GM12878 (cell line): ENCODE measurements at regions of chr17 and their contacts with region 1.

Region 1: DNA sequence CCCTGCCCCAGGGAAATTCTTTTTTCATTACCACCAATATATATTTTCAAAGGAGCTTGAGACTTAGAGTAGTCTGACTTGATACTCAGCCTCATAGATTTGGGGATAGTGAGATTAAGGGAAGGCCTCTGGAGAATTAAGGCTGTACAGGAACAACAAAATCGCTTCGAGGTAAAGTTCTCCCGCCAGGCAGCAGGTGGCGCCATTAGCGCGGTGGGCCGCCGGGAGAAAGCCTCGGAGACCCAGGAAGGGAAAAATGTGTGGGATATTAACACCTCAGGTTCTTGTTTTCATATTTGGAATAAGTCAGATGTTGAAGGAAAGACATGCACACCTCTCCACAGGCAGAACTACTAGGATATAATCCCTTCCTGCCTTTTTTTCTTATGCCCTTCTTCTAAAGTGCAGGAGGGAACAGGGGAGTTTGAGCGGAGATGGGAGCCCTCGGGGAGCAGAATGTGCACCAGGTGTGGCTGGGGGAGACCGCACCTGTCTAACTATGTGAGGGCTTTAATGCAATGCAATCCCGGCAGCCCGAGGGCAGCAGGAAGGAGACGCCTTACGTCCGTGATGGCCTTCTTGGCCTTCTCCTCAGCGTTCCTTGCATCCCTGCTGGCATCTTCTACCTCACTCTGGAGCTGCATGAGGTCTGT is 25.9 kb downstream of the MYH3 start:
- DNase-seq: no peak
- ATAC-seq: 0 out of 3 replicates have a peak, but pooled peaks have one; percentile 29
- H3K4me3 ChIP-seq: no peak overlapping the region
- H3K27ac ChIP-seq: no peak overlapping the region
- H3K4me1 ChIP-seq: peaks cover 21% of the 10 kb centered on the region
- H3K27me3 ChIP-seq: no peaks in the 10 kb centered on the region
- CTCF ChIP-seq: peak; percentile 66 to 92 (median 89)
- EP300 ChIP-seq: no peak
- POLR2A ChIP-seq: no peak
- RAD21 ChIP-seq: peak; percentile 61

Region 2: DNA sequence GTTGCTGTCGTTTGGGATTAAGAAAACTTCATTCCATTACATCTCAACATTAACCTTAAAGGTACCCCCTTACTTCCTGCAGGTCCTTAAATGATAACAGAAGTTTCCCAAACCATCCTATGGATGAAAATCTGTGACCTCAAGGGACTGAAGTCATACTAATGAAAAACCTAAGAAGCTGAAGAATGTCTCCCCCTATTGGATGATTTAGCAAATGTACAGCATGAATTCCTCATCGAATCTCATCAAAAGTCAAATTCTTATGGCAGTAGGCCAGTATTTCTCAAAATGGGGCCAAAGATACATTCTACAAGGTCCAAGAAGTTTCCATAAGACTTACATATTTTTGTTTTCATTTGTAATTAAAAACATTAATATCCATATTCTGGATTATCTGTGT is 52.7 kb after region 1 on chr17:
- CTCF ChIA-PET with region 1: interaction called, 17 read pairs
- POLR2A ChIA-PET with region 1: no interaction called
- RAD21 ChIA-PET with region 1: no interaction called
- SMC1A ChIA-PET with region 1: interaction called, 5 read pairs
- in situ Hi-C with region 1: no loop called
- intact Hi-C with region 1: loop called (anchors 1 kb)
- DNase-seq: no peak
- ATAC-seq: no peak
- H3K4me3 ChIP-seq: no peak overlapping the region
- H3K27ac ChIP-seq: no peak overlapping the region
- H3K4me1 ChIP-seq: no peaks in the 10 kb centered on the region
- H3K27me3 ChIP-seq: no peaks in the 10 kb centered on the region
- CTCF ChIP-seq: peak; percentile 30 to 61 (median 32); a peak in 5 of 6 replicates
- EP300 ChIP-seq: no peak
- POLR2A ChIP-seq: no peak
- RAD21 ChIP-seq: peak; percentile 34; the same call in 1 of the 2 replicates

Region 3: DNA sequence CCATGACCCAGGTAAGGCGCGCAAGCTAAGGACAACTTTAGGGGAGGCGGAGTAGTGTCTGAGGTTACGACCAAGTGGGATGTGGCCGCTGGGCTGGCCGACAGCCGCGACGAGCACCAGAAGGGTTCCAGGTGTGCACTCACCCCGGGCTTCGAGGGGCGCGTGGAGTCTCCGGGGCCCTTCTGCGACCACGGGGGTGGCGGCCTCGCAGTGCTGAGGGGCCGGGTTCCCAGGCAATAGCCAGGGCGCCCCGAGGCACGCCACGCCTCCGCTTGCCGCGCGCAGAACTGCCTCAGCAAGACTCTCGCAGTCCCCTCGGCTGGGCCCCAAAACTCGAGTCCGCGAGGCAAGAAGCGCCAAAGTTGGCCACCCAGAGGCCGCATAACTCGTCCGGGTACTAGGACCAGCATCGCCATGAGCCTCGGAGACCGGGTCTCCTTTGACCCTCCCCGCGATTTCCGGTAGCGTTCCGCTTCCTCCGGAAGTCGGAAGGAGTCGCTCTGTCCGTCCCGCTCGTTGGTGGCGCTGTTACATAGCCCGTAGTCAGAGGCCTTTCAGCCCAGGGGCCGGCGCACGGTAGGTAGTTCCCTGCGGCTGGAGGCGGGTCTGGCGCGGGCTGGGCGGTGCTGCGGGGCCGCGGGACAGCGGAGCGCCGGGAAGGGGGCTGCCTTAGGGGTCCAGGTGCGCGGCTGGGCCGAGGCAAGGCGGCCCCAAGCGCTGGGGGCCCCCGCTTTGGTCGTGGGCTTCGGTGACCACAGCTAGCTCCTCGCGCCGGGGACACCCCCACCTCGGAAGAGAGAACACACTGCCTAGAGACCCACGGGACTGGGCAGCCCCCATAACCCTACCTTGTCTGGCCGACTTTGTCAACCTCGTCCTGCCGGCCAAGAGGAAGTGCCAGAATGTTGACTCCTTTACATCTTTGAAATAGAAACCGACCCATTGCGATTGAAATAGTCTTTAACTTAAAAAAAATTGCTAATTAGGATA is 66.2 kb after region 1 on chr17 and contains the starts of genes ADPRM and SCO1:
- CTCF ChIA-PET with region 1: interaction called, 13 read pairs
- POLR2A ChIA-PET with region 1: no interaction called
- RAD21 ChIA-PET with region 1: interaction called, 3 read pairs
- SMC1A ChIA-PET with region 1: no interaction called
- in situ Hi-C with region 1: no loop called
- intact Hi-C with region 1: no loop called
- DNase-seq: peak; percentile 73
- ATAC-seq: peak; percentile 98
- H3K4me3 ChIP-seq: peak within 1 kb of the TSS; percentile 93
- H3K27ac ChIP-seq: peak within 1 kb of the TSS; percentile 91
- H3K4me1 ChIP-seq: peaks cover 10% of the 10 kb centered on the region
- H3K27me3 ChIP-seq: no peaks in the 10 kb centered on the region
- CTCF ChIP-seq: peak; percentile 31 to 47 (median 34); a peak in 5 of 6 replicates
- EP300 ChIP-seq: peak; percentile 8 to 30; a peak in 1 of 4 replicates
- POLR2A ChIP-seq: peak; percentile 97
- RAD21 ChIP-seq: no peak
- polyA plus RNA-seq, gene ADPRM: 14.2 to 18.4 TPM
- polyA plus RNA-seq, gene SCO1: 8.2 to 24.8 TPM

Region 4: DNA sequence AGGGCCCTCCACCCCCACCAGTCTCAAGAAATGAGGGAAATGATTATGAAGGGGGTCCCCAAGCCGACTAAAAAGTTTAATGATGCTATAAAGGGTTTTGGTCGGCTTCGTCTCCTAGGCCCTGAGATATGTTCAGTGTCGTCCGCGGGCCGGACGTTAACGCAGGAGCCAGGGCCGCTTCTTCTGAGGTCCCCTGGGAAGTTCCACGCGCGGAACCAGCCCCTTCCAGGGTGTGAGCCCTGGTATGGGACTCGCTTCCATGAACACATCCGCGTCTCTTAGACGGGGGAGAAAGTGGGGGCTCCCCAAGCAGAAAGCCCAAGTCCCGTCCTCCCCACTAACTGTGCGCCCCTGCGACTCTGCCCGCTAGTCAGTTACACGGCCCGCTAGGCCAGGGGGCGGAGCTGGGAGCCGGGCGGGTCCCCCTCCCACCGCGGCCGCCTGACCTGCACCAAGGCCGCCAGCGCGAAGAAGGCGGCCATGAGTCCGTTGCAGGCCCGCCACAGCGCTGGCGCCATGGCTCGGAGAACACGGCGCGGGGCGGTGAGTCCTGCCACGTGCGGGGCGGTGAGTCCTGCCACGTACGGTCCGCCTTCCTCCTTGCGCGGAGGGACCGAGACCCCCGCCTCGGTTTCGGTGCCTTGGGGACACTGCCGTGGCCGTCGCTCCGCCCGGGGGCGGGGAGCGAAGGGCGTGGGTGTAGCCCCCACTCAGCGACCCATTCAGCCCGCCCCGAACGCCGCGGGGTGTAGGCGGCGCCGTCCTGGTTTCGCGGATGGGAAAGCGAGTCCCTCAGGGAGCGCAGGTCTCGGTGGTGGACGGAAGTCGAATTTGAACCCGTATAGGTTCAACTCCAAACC is 98.4 kb after region 1 on chr17 and contains the start of gene TMEM220:
- CTCF ChIA-PET with region 1: no interaction called
- POLR2A ChIA-PET with region 1: no interaction called
- RAD21 ChIA-PET with region 1: no interaction called
- SMC1A ChIA-PET with region 1: no interaction called
- in situ Hi-C with region 1: no loop called
- intact Hi-C with region 1: loop called (anchors 10 kb)
- DNase-seq: no peak
- ATAC-seq: peak; percentile 93
- H3K4me3 ChIP-seq: peak within 1 kb of the TSS; percentile 72
- H3K27ac ChIP-seq: no peak within 1 kb of the TSS
- H3K4me1 ChIP-seq: no peaks in the 10 kb centered on the region
- H3K27me3 ChIP-seq: no peaks in the 10 kb centered on the region; a peak in 2 of 4 replicates
- CTCF ChIP-seq: no peak
- EP300 ChIP-seq: no peak
- POLR2A ChIP-seq: peak; percentile 57
- RAD21 ChIP-seq: no peak
- polyA plus RNA-seq, gene TMEM220: 0.02 to 0.07 TPM

Region 5: DNA sequence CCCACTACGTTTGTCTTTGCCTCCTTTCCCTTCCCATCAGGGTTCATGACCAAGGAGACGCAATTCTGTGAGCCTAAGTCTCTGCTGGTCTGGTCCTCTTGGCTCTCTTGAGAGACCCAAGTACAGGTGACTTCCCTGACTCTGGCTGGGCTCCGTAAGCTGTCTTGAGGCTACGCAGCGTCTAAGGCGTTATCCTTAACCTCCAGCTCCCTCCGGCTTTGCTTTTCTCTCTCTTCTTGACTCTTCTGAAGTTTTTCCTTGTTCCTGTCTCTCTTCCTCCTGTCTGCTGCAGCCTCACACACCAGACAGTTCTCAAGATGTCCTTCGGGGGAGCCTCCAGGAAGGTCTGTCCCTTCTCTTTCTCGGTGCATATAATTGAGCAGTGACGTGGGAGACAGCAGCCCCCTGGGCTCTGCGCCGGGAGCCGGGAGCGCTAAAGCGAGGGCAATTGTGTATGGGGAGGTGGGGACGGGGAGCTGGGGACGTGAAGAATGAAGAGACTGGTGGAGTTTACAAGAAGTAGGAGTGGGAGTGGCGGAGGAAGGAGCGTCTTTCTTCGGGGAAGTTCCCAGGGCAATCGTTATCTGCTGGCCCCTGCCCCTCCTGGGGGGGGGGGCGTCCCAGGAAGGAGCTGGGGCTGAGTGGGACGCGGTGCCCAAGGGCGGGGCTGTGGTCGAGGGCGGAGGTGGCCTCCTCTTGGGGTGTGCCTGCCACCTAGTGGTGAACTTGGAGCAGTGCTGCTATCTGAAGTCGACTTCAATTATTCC is 213.6 kb after region 1 on chr17:
- CTCF ChIA-PET with region 1: interaction called, 16 read pairs
- POLR2A ChIA-PET with region 1: no interaction called
- RAD21 ChIA-PET with region 1: interaction called, 3 read pairs
- SMC1A ChIA-PET with region 1: interaction called, 8 read pairs
- in situ Hi-C with region 1: no loop called
- intact Hi-C with region 1: loop called (anchors 5 kb)
- DNase-seq: peak; percentile 5
- ATAC-seq: peak; percentile 99
- H3K4me3 ChIP-seq: 0 out of 2 replicates have a peak overlapping the region, but pooled peaks have one; percentile 9
- H3K27ac ChIP-seq: no peak overlapping the region
- H3K4me1 ChIP-seq: no peaks in the 10 kb centered on the region
- H3K27me3 ChIP-seq: no peaks in the 10 kb centered on the region; a peak in 1 of 4 replicates
- CTCF ChIP-seq: peak; percentile 81 to 93 (median 84)
- EP300 ChIP-seq: no peak
- POLR2A ChIP-seq: no peak
- RAD21 ChIP-seq: peak; percentile 72